Dorsolateral prefrontal cortex (tissue), 120 donors: ENCODE measurements at regions of chr2 and their contacts with region 1.

Region 1: GRCh38 chr2:196088203-196088602 is 19.6 kb upstream of the DNAH7 start:
- DNase-seq: no peak
- H3K4me3 ChIP-seq: no peak overlapping the region
- H3K27ac ChIP-seq: no peak overlapping the region
- H3K27me3 ChIP-seq: no peaks in the 10 kb centered on the region
- CTCF ChIP-seq: no peak

Region 2: DNA sequence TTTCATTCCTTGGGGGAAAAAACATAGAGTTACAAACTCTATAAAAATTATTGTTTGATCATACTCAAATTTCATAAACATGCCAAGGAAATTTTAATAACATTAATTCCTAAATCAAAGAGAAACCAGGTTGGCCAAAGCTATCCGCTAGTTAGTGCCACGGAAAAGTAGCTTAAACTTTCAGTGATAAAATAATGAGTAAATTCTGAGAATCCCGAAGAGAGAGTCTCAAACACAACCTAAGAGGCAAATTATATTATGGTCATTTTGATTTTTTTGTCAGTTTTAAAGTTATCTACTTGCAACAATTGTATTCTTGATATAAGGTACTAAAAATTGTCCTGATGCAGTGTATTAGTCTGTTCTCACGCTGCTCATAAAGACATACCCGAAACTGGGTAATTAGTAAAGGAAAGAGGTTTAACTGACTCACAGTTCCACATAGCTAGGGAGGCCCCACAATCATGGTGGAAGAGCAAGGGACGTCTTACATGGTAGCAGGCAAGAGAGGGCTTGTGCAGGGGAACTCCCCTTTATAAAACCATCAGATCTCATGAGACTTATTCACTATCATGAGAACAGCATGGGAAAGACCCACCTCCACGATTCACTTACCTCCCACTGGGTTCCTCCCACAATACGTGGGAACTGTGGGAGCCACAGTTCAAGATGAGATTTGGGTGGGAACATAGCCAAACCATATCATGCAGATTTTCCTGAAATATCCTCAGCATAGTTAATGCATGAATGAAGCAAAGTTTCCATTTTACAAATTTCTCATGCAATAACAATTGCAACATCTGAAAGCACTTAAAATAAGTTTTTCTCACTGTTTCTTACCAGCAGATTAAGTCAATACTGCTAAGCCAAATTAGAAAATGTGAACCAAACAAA is 289.0 kb after region 1 on chr2:
- intact Hi-C with region 1: no loop called
- DNase-seq: no peak
- H3K4me3 ChIP-seq: no peak overlapping the region
- H3K27ac ChIP-seq: no peak overlapping the region
- H3K27me3 ChIP-seq: no peaks in the 10 kb centered on the region
- CTCF ChIP-seq: no peak

Region 3: GRCh38 chr2:196750982-196751635 is 662.9 kb after region 1 on chr2:
- intact Hi-C with region 1: loop called in 1 of 2 experiments (anchors 10 kb)
- DNase-seq: peak in 8 of 10 donors; percentile 16 to 60 (median 46)
- H3K4me3 ChIP-seq: no peak overlapping the region
- H3K27ac ChIP-seq: no peak overlapping the region
- H3K27me3 ChIP-seq: no peaks in the 10 kb centered on the region
- CTCF ChIP-seq: peak; percentile 39 to 82 (median 71)